Breast epithelium (tissue), 4 donors: ENCODE measurements at regions of chr9 and their contacts with region 1.

Region 1: DNA sequence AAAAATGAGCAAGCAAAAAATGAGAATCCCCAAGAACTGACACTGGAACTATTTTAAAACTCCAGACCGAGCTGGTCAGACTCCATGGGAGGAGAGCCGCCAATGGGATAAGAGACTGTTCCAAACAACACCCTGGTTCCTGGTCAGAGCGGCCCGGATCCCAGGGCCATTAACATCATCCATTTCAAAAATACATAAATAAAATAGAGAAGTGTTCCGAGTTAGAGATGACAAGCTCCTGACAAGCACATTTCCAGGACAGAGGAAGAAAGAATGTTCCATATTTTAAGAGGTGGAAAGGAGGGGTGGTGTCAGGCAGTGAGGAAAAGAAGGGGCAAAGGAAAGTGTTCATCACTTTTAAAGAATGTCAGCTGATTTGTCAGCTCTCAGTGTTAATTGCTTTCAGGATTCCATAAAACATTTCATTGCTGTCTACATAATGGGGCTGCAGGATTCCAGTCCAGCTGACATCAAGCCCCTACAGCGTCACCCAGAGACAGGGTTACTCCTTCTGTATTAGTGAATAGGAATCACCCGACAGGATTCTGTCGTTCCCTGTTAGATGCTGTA is 202.5 kb upstream of the TRIM32 start:
- DNase-seq: no peak
- H3K4me3 ChIP-seq: no peak overlapping the region
- H3K27ac ChIP-seq: no peak overlapping the region
- H3K4me1 ChIP-seq: no peaks in the 10 kb centered on the region
- H3K27me3 ChIP-seq: no peaks in the 10 kb centered on the region
- CTCF ChIP-seq: no peak
- POLR2A ChIP-seq: no peak

Region 2: GRCh38 chr9:115604831-115605483 is 879.6 kb before region 1 on chr9:
- intact Hi-C with region 1: loop called (anchors 5 kb)
- DNase-seq: no peak
- H3K4me3 ChIP-seq: no peak overlapping the region
- H3K27ac ChIP-seq: no peak overlapping the region
- H3K4me1 ChIP-seq: no peaks in the 10 kb centered on the region
- H3K27me3 ChIP-seq: no peaks in the 10 kb centered on the region
- CTCF ChIP-seq: no peak
- POLR2A ChIP-seq: no peak

Region 3: GRCh38 chr9:116450378-116451139 is 34.0 kb before region 1 on chr9:
- intact Hi-C with region 1: no loop called
- DNase-seq: no peak
- H3K4me3 ChIP-seq: no peak overlapping the region
- H3K27ac ChIP-seq: no peak overlapping the region
- H3K4me1 ChIP-seq: no peaks in the 10 kb centered on the region
- H3K27me3 ChIP-seq: no peaks in the 10 kb centered on the region
- CTCF ChIP-seq: no peak
- POLR2A ChIP-seq: no peak